Head of caudate nucleus (tissue), 42 donors: ENCODE measurements at regions of chr4 and their contacts with region 1.

Region 1: DNA sequence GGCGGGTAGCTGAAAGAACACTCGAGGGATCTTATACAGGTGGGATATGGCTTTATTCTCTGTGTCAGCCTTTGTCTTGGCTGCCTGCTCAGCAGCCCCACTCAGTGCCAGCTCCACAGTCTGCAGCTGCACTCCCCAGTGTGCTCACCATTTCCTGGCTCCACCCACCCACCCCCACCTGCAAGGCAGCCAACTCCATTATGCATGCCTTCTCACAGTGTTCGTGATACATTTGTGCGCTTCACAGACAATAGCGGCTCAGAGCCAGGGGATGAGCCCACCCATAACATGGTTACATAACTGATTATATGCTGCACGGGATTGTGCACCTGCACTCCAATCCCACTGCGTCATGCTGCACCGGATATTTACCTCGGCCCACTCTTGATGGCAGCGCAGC is 8.8 kb upstream of the TMEM128 start:
- DNase-seq: peak in 26 of 42 donors; percentile 14 to 81 (median 40)

Region 2: DNA sequence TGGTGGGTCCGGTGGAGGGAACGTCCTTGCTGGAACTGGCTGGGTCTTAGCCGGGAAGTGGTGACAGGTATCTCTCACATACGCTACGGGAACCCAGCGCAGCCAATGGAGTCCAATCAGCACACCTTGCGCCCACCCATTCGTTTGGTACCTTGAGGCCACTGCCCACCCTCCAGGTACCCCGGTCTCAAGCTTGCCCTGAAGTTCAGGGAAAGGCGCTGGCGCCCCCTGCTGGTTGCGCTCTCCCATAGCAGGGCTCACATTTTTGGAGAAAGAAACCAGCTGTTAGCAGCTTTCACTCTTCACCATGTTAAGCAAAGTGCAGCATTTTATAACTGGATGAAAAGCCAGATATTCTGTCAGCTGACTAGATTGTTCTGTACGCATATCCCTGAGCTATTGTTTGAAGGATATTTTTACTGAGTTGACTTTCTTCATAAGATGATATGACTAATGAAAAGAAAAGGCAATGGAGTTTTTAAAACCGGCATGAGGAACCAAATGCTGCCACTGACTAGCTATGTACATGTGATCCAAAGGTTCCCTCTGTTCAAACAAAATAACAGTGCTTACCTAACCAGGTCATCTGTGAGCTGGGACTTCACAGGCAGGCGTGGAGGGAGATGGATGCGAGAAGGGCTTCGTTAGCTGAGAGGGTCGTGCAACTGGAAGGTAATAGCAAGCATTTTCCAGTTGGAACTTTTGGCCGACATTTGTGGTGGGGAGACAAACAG is 73.8 kb before region 1 on chr4:
- intact Hi-C with region 1: no loop called
- DNase-seq: peak in 27 of 42 donors; percentile 6 to 57 (median 28)

Region 3: DNA sequence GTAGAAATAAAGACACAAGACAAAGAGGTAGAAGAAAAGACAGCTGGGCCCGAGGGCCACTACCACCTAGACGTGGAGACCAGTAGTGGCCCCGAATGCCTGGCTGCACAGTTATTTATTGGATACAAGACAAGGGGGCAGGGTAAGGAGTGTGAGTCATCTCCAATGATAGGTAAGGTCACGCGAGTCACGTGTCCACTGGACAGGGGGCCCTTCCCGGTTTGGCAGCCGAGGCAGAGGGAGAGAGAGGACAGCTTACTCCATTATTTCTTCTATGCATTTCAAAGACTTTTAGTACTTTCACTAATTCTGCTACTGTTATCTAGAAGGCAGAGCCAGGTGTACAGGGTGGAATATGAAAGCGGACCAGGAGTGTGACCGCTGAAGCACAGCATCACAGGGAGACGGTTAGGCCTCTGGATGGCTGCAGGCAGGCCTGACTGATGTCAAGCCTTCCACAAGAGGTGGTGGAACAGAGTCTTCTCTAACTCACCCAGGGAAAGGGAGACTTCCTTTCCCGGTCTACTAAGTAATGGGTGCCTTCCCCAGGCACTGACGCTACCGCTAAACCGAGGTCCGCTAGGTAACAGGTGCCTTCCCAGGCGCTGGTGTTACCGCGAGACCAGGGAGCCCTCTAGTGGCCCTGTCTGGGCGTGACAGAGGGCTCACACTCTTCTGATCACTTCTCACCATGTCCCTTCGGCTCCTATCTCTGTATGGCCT is 78.2 kb after region 1 on chr4:
- intact Hi-C with region 1: loop called (anchors 5 kb)
- DNase-seq: peak; percentile 20 to 89 (median 68)

Region 4: GRCh38 chr4:4430492-4431197 is 173.8 kb after region 1 on chr4:
- intact Hi-C with region 1: loop called (anchors 10 kb)
- DNase-seq: peak in 30 of 42 donors; percentile 27 to 78 (median 54)

Region 5: GRCh38 chr4:4507923-4508322 is 251.1 kb after region 1 on chr4:
- intact Hi-C with region 1: no loop called
- DNase-seq: no peak

Region 6: DNA sequence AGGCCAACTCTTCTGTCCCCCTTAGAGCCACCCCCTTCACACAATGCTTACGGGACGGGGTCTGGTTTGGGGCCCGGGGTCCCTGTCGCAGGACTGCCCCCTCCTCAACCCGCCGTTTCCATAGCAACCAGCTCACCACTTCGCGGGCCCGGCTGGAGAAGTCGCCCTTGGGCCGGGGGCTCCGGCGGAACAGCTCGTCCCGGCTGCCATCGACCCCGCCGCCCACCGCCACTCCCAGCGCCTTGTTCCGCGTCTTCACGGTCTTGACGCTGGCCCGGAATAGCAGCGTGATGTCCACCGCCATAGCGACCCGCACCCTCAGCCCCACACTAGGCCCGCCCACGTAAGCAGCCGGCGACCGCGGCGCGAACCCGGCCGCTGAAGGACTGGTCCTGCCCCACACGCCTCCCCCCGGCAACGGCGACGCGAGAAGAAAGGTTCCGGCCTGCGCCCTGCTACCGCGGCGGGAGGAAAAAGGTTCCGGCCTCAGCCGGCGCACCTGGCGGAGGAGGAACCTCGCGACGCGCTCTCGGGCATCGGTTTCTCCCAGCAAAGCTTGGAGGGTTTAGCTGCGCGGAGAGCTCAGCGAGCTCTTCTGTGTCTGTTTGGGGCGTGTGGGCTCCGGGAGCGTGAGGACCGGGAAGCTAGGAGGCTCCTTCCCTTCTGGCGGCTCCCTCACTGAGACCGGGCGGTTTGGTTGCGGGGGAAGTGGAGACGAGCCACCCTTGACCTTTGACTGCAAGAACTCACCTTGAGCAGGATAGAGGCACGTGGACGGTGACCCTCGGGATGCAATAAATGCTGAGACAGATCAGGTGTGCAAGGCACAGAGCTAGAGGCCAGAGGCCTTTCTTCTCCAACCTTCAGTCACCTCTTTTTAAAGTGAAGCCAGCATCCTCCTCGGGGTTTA is 285.1 kb after region 1 on chr4 and contains the start of gene STX18:
- intact Hi-C with region 1: no loop called
- DNase-seq: peak; percentile 43 to 94 (median 86)